ENCODE measurements at regions of chr20 and their contacts with region 1.

Region 1: GRCh38 chr20:11274141-11274594 is 600.4 kb upstream of the JAG1 start:
- DNase-seq: peak in 5 of 10 donors; percentile 33 to 81 (median 36)

Region 2: DNA sequence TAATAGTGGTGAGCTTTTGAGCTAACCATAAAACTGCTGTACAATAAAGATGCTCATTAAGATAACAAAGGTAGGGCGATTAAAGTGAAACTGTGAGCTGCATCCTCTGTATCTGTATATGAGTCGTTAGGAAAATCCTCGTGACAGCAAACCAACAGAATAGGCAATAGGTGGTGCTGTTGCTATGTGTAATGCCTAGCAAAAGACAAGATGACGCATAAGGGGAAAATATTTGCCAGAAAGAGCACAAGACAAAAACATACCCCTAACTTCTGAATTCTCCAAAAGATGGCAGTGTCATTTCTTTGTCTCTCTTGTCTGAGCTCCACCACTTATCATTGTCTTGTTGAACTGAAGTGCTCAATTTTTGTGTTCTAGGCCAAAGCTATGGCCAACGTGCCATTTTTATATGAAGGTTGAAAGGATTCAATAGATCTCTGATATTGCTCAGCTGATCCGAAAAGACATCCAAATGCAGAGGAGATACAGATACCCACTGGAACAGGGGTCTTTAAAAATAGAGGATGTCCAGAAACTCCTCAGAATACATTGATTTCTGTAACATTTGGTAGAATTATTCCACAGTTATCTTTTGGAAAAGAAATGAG is 1295.7 kb before region 1 on chr20:
- intact Hi-C with region 1: loop called (anchors 10 kb)
- DNase-seq: peak in 3 of 10 donors; percentile 18 to 24 (median 18)

Region 3: DNA sequence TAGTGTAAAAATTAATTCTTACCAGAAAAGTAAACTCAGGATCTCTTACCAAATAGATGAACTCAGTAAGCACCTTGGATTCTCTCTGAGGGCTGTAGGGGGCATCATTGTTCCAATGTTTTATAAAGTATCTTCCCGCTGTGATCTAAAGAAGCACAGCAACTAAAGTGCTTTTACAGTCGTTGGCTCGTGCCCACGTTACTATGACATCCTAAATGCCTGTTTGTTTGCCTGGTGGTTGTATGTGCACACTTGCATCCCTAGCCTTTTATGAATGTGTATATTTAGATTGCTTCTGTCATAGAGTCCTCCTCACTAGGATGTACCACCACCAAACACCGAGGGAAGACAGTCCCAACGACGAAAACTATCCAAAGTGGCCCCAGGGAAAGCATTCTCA is 804.6 kb before region 1 on chr20:
- intact Hi-C with region 1: loop called (anchors 2 kb)
- DNase-seq: peak in 1 of 10 donors; percentile 20

Region 4: GRCh38 chr20:10553326-10553984 is 720.7 kb before region 1 on chr20:
- intact Hi-C with region 1: loop called (anchors 2 kb)
- DNase-seq: peak in 7 of 10 donors; percentile 51 to 89 (median 56)

Region 5: GRCh38 chr20:10673988-10674711 is 600.0 kb before region 1 on chr20 and contains the start of gene JAG1:
- intact Hi-C with region 1: loop called (anchors 1 kb)
- DNase-seq: peak; percentile 84 to 99 (median 93)

Region 6: DNA sequence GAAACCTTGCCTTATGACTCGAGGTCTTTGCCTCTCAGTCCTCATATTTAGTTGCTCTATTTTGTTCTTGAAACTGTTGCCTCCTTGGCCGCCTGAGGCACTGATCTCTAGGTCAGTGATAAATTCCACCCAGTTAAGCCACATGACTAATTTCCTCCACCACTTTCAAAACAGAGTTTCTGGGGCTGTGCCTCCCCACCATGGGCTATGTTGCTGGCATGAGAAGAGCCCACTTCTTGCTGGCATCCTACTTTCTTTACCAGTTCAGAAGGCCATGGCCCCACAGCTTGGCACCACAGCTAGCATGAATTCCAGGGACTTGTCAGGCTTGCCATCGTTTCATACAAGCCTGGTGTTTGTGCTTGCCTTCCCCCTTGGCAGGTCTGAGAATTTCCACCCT is 239.0 kb before region 1 on chr20:
- intact Hi-C with region 1: no loop called
- DNase-seq: no peak